ENCODE measurements at regions of chr5 and their contacts with region 1.

Region 1: GRCh38 chr5:59039296-59040023 is 456.6 kb downstream of the RAB3C start:
- DNase-seq: peak; percentile 94
- ATAC-seq: peak; percentile 64

Region 2: DNA sequence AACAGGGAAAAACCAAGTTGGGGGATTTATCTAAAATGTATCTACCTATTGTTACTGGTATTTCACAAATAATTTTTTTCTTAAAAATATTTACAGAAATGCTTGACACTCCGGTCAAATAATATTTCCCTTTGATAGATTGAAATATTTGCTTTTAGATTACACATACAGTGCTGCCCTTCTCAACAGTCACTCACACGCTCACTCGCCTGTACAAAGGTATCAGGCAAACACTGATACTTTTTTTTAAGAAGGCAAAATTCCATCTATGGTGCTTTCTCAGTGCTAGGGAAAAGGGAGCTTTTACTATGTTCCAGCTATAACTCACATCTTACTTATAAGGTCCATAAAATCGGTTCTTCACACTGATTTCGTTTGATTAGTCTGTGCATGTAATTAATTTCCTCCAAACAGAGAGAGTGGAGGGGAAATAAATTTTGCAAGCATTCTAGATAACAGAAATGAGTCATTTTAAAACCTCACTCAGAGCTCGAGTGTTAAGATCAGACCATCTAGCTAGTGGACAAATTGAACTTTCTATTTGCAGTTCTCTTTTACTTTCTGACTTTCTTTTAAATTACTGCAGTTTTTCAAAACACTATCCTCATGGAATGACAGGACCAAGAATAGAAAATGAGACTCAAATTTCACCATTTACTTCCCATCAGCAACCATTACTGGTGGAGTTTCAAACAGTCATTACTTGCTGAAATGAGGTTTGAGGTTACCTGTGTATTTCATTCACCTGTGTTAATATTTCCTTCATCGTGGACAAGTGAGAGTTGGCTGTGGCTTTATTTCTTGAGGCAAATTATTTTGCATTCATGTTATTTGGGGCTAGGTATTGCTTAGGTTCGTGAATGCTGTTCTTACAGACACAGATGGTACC is 183.4 kb before region 1 on chr5:
- intact Hi-C with region 1: no loop called
- DNase-seq: no peak
- ATAC-seq: no peak

Region 3: DNA sequence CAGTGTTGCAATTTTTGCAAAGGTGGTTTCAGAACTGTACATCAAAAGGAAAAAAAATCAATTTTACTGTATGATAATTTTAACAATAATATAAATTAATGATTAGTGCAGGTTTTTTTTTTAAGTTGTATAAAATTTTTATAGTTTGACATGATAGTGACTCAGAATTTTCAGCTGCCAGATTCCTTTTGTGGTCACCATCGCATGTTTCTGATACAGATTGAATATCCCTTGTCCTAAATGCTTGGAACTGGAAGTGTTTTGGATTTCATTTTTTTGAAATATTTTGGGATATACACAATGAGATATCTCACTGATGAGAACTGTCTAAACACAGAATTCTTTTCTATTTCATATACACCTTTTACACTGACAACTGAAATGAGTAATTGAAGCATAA is 95.2 kb before region 1 on chr5:
- intact Hi-C with region 1: no loop called
- DNase-seq: no peak
- ATAC-seq: no peak

Region 4: GRCh38 chr5:59126708-59127573 is 87.5 kb after region 1 on chr5:
- intact Hi-C with region 1: loop called (anchors 2 kb)
- DNase-seq: no peak
- ATAC-seq: peak; percentile 7

Region 5: GRCh38 chr5:59152701-59153245 is 113.3 kb after region 1 on chr5:
- intact Hi-C with region 1: loop called (anchors 10 kb)
- DNase-seq: no peak
- ATAC-seq: peak; percentile 36

Region 6: GRCh38 chr5:59174248-59174844 is 134.9 kb after region 1 on chr5:
- intact Hi-C with region 1: loop called (anchors 5 kb)
- DNase-seq: no peak
- ATAC-seq: peak; percentile 87